ENCODE measurements at regions of chr1 and their contacts with region 1.

Region 1: DNA sequence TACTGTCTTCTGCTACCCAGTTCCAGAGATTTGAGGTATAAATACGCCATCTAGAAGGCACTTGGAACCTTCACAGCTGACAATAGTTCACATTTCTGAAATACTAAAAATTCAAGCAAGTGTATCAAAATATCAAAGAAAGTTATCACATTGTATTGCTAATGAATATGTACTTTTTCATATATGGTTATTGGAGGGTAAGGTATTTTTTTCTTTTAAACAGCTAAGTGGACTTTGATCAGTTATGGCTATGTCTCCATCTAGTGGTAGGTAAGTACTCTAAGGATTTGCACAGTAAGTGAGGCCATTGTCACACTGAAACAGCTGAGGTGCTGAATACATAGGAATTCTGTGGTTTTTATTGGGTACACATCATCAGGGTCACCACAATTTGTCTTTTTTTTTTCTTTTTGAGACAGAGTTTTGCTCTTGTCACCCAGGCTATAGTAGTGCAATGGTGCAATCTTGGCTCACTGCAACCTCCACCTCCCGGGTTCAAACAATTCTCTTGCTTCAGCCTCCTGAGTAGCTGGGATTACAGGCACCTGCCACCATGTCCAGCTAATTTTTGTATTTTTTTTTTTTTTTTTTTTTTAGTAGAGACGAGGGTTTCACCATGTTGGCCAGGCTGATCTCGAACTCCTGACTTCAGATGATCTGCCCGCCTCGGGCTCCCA is 49.1 kb upstream of the CR2 start:
- DNase-seq: peak in 1 of 10 donors; percentile 68

Region 2: GRCh38 chr1:207128336-207128921 is 276.6 kb before region 1 on chr1:
- intact Hi-C with region 1: no loop called
- DNase-seq: no peak

Region 3: GRCh38 chr1:207321079-207321789 is 83.8 kb before region 1 on chr1 and contains the start of gene CD55:
- intact Hi-C with region 1: loop called (anchors 5 kb)
- DNase-seq: peak; percentile 69 to 98 (median 84)

Measured in posterior cingulate gyrus (tissue), 11 donors.